ENCODE measurements at regions of chr17 and their contacts with region 1.

Region 1: GRCh38 chr17:28698253-28698941 is 13.3 kb downstream of the PROCA1 start:
- DNase-seq: no peak
- ATAC-seq: no peak

Region 2: GRCh38 chr17:28644985-28645939 is 53.1 kb before region 1 on chr17 and contains the start of gene BLTP2:
- intact Hi-C with region 1: loop called (anchors 5 kb)
- DNase-seq: peak; percentile 98
- ATAC-seq: peak; percentile 97
- total RNA-seq, gene BLTP2: 73.8 TPM